K562 (cell line): ENCODE measurements at regions of chr9 and their contacts with region 1.

Region 1: DNA sequence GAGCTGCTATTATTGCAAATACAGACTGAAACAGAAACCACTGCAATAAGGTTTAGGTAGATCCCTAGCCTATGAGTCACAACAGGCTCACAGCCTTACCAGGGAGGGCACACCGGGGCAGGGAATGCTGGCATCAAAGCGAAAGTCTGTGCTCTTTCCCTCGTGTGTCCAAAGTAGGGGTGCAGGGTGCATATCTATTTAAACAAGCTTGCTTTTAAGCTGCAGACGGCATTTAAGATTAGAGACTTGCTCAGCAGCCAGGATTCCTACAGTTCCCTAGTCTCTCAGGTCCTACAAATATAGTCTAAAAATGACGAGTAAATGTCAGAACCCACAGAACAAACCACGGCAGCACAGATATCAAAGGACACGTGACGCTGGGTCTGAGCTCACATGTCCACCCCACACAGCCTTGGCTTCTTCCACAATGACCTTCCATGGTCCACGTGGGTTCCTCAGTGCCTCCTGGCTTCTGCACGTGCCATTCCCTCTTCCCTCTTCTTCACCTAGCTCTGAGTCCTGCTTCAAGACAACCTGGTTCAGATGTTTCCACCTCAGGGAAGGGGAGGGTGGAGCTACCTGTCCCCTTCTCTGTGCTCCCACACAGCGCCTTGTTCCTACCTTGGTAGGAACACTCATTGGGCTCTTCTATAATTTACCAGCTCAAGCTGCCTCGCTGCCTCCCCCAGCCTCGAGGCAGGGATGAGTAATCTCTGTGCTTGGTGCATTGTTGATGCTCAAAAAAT is 193.2 kb downstream of the MAPKAP1 start:
- DNase-seq: peak in 2 of 4 experiments; percentile 30 to 36
- ATAC-seq: peak; percentile 63
- H3K4me3 ChIP-seq: no peak overlapping the region
- H3K27ac ChIP-seq: no peak overlapping the region; the same call in 2 of the 3 replicates
- H3K4me1 ChIP-seq: peaks cover 0 to 11% of the 10 kb centered on the region in 2 experiments; a peak in 4 of 5 replicates
- H3K27me3 ChIP-seq: no peaks in the 10 kb centered on the region
- CTCF ChIP-seq: no peak
- EP300 ChIP-seq: no peak
- POLR2A ChIP-seq: no peak
- RAD21 ChIP-seq: no peak

Region 2: DNA sequence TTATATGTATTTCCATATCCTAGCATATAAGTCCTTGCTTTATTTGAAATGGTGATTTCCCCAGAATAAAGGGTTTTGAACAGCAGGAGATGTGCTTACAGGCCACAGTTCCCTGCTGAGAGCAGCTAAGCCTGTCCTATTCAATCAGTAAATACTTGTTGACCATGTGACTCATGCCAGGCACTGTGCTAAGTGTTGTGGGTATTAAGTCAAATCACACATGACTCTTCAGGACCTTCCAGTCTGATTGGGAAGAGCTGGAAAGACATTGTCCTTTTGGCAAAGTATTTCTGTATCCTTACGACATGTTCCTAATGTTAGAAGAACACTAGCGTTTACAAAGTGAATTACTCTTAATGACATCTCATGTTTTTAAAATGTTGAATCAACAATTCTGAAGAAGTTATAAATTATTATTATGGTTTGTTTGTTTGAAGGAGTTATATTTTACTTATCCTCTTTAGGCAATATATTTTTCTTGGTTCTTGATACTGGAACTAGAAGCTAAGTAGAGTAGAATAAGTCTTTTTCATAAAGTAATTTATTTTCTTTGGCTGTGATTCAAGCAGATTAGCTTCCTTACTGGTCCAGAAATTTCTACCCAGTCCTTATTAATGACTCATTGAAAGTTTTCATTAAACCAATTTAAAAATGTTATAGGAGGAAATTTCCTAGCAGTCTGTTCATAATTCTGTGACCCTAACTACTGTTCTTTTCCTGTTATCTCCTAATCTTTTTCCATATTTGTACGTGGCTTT is 170.1 kb before region 1 on chr9:
- CTCF ChIA-PET with region 1: no interaction called
- POLR2A ChIA-PET with region 1: no interaction called
- in situ Hi-C with region 1: no loop called
- intact Hi-C with region 1: no loop called
- DNase-seq: no peak
- ATAC-seq: no peak
- H3K4me3 ChIP-seq: no peak overlapping the region
- H3K27ac ChIP-seq: no peak overlapping the region
- H3K4me1 ChIP-seq: no peaks in the 10 kb centered on the region
- H3K27me3 ChIP-seq: no peaks in the 10 kb centered on the region
- CTCF ChIP-seq: no peak
- EP300 ChIP-seq: no peak
- POLR2A ChIP-seq: no peak
- RAD21 ChIP-seq: no peak

Region 3: GRCh38 chr9:125525921-125526631 is 12.2 kb after region 1 on chr9:
- CTCF ChIA-PET with region 1: no interaction called
- POLR2A ChIA-PET with region 1: interaction called, 11 read pairs
- in situ Hi-C with region 1: no loop called
- intact Hi-C with region 1: no loop called
- DNase-seq: no peak
- ATAC-seq: no peak
- H3K4me3 ChIP-seq: no peak overlapping the region
- H3K27ac ChIP-seq: no peak overlapping the region
- H3K4me1 ChIP-seq: no peaks in the 10 kb centered on the region; a peak in 1 of 5 replicates
- H3K27me3 ChIP-seq: no peaks in the 10 kb centered on the region
- CTCF ChIP-seq: no peak
- EP300 ChIP-seq: no peak
- POLR2A ChIP-seq: no peak
- RAD21 ChIP-seq: no peak

Region 4: GRCh38 chr9:125646217-125646616 is 132.4 kb after region 1 on chr9:
- CTCF ChIA-PET with region 1: no interaction called
- POLR2A ChIA-PET with region 1: no interaction called
- in situ Hi-C with region 1: no loop called
- intact Hi-C with region 1: no loop called
- DNase-seq: no peak
- ATAC-seq: no peak
- H3K4me3 ChIP-seq: no peak overlapping the region
- H3K27ac ChIP-seq: no peak overlapping the region
- H3K4me1 ChIP-seq: no peaks in the 10 kb centered on the region
- H3K27me3 ChIP-seq: no peaks in the 10 kb centered on the region
- CTCF ChIP-seq: no peak
- EP300 ChIP-seq: no peak
- POLR2A ChIP-seq: no peak
- RAD21 ChIP-seq: no peak

Region 5: GRCh38 chr9:125997196-125997823 is 483.5 kb after region 1 on chr9:
- CTCF ChIA-PET with region 1: no interaction called
- POLR2A ChIA-PET with region 1: no interaction called
- in situ Hi-C with region 1: no loop called
- intact Hi-C with region 1: no loop called
- DNase-seq: no peak
- ATAC-seq: no peak
- H3K4me3 ChIP-seq: no peak overlapping the region
- H3K27ac ChIP-seq: no peak overlapping the region
- H3K4me1 ChIP-seq: no peaks in the 10 kb centered on the region
- H3K27me3 ChIP-seq: peaks cover 7 to 69% of the 10 kb centered on the region in 2 experiments; a peak in 4 of 5 replicates
- CTCF ChIP-seq: no peak
- EP300 ChIP-seq: no peak
- POLR2A ChIP-seq: no peak
- RAD21 ChIP-seq: no peak